Activated T-helper 1 cell treated with anti-CD3 and anti-CD28 coated beads, Interleukin-12 subunit alpha, Interleukin-12 subunit beta, Interleukin-2, Interleukin-4 antibody, amounts not matched to agents 30 ng/mL and 10 ng/mL and 1 ng/mL, durations not matched to agents 14 hours and 24 hours and 36 hours (primary cell): ENCODE measurements at regions of chr3 and their contacts with region 1.

Region 1: DNA sequence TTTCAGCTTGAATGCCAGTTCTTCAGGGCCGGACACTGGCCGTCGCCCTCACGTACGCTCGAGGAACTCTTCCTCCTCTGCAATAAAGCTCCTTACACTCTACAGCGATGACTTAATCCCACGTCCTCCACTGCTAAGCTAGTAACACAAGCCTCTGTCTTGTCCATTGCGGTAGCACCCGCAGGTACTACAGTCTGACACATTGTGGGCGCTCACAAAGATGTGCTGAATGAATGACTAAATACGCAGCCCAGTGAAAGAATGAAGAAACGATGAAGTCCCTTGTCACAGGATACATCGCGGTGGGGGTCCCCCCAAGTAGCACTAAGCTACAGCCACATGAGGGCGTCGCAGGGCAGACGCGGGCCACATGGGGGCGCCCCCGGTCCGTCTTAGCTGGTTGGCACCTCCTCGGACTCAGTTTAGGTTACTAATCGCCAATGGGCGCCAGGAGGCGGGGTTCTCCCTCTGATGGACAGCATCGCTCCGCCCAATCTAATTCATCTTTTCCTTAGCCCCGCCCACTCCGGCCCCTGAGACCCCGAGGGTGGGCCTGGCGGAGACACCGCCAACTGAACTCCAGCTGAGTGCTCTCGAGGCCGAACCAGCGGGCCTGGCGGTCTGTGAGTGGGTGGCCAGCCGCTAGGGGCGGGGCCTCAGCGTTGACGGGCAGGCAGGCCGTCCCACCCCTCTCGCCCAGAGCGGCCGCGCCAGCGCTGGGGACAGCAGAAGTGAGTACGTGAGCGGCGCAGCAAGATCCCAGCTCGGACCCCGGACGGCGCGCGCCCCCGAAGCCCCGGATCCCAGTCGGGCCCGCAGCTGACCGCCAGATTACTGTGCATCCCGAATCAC is at the start of gene EPHB3:
- DNase-seq: peak; percentile 79
- H3K4me3 Mint-ChIP-seq: peak within 1 kb of the TSS; percentile 73
- H3K27ac Mint-ChIP-seq: no peak within 1 kb of the TSS
- H3K4me1 Mint-ChIP-seq: peaks cover 18% of the 10 kb centered on the region
- H3K27me3 Mint-ChIP-seq: peaks cover 54% of the 10 kb centered on the region
- total RNA-seq, gene EPHB3: 0.31 TPM in 1 of 2 replicates, not detected in the other

Region 2: DNA sequence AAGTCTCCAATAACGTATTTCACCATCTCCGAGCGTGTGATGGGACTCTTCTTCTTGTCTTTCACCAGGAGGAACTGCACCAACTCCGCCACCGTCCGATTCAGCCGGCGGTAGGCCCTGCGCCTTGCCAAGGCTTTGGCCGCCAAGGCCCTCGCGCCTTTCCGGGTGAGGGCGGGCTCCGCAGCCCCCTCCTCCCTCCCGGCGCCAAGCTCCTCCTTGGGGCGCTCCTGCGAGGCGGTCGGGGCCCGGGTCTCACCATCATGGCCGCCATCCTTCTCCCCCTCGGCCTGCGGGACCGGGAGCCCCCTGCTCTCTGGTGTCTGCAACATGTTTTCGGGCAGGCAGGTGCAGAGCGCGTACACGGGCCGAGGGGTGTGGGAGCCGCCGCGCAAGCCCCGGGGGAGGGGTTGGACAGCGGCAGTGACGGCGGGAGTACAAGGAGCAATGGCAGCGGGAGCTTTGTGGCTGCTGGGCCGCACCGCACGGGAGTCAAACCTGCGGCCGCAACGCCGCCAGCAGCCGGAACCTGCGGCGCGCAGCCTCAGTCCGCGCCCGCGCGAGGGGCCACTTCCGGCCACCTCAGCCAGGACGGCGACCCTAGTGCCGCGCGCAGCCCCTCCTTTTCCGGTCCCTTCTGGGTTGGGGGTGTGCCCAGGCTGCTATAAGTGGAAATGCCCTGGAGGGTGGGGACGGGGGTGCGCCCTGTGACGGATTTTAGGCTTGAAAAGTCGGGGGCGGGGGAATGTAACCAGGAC is 150.4 kb after region 1 on chr3 and contains the start of gene MAGEF1:
- intact Hi-C with region 1: loop called (anchors 1 kb)
- DNase-seq: peak; percentile 74
- H3K4me3 Mint-ChIP-seq: peak within 1 kb of the TSS; percentile 94
- H3K27ac Mint-ChIP-seq: peak within 1 kb of the TSS; percentile 77
- H3K4me1 Mint-ChIP-seq: peaks cover 37% of the 10 kb centered on the region
- H3K27me3 Mint-ChIP-seq: peaks cover 20% of the 10 kb centered on the region
- total RNA-seq, gene MAGEF1: 16.0 and 17.3 TPM in 2 replicates

Region 3: GRCh38 chr3:184727357-184728009 is 166.2 kb after region 1 on chr3:
- intact Hi-C with region 1: loop called (anchors 1 kb)
- DNase-seq: peak; percentile 8
- H3K4me3 Mint-ChIP-seq: no peak overlapping the region
- H3K27ac Mint-ChIP-seq: no peak overlapping the region
- H3K4me1 Mint-ChIP-seq: no peaks in the 10 kb centered on the region
- H3K27me3 Mint-ChIP-seq: peaks cover 40% of the 10 kb centered on the region

Region 4: GRCh38 chr3:184777336-184778004 is 216.2 kb after region 1 on chr3:
- intact Hi-C with region 1: loop called (anchors 1 kb)
- DNase-seq: peak; percentile 69
- H3K4me3 Mint-ChIP-seq: no peak overlapping the region
- H3K27ac Mint-ChIP-seq: no peak overlapping the region
- H3K4me1 Mint-ChIP-seq: no peaks in the 10 kb centered on the region
- H3K27me3 Mint-ChIP-seq: peaks cover 17% of the 10 kb centered on the region